HCT116 (cell line): ENCODE measurements at regions of chr1 and their contacts with region 1.

Region 1: DNA sequence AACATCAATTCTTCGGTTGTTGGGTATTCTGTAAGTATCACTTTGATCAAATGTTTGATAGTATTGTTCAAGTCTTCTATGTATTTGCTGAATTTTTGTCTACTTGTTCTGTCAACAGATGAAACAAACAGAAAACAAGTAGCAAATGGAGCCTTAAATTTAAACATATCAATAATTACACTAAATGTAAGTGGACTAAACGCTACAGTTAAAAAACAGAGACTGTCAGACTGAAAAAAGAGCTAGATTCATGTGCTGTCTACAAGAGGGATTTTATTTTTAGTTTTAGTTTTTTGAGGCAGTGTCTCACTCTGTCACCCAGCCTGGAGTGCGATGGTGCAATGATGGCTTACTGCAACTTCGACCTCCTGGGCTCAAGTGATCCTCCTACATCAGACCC is 10.7 kb upstream of the RAD54L start:
- DNase-seq: no peak
- ATAC-seq: no peak
- H3K4me3 ChIP-seq: no peak overlapping the region
- H3K27ac ChIP-seq: no peak overlapping the region
- H3K4me1 ChIP-seq: no peaks in the 10 kb centered on the region
- H3K27me3 ChIP-seq: no peaks in the 10 kb centered on the region
- CTCF ChIP-seq: no peak
- POLR2A ChIP-seq: no peak
- RAD21 ChIP-seq: no peak

Region 2: DNA sequence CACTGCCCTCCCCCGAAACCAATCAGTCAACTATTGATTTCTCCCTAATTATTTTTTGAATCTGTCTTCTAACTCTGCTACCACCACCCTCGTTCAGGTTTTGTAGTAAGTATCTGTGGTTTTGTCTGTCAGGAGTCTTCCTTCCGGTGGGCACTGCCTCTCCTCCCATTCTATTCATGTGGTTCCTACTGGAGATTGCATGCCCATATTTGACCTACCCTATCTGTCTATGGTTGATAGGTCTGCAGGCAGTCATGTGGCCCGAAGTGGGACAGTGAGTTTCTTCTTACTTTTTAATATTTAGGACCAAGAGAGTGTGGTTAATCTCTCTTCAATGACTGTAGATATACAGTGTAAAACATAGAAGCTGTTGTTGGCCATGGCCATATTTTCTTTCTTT is 451.3 kb before region 1 on chr1:
- CTCF ChIA-PET with region 1: no interaction called
- POLR2A ChIA-PET with region 1: no interaction called
- RAD21 ChIA-PET with region 1: no interaction called
- intact Hi-C with region 1: no loop called
- DNase-seq: no peak
- ATAC-seq: no peak
- H3K4me3 ChIP-seq: no peak overlapping the region
- H3K27ac ChIP-seq: no peak overlapping the region
- H3K4me1 ChIP-seq: no peaks in the 10 kb centered on the region
- H3K27me3 ChIP-seq: no peaks in the 10 kb centered on the region
- CTCF ChIP-seq: no peak
- POLR2A ChIP-seq: no peak
- RAD21 ChIP-seq: no peak

Region 3: DNA sequence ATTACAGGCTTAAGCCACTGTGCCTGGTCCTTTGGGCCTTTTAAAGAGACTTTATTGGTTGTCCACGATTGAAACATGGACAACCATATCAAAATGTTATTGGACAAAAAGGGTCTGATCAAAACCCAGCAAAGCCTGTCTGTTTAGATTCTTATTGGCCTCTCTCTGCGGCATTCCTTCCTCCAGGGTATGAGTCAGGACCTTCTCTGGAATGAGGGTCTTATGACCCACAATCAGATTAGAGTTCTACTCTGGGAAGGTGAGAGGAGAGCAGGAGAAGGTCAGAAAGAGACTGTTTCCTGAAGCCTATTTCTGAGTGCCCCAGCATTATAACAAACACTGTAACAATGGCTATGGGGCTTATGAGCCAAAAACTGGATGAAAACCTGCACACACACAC is 25.8 kb before region 1 on chr1:
- CTCF ChIA-PET with region 1: no interaction called
- POLR2A ChIA-PET with region 1: no interaction called
- RAD21 ChIA-PET with region 1: no interaction called
- intact Hi-C with region 1: no loop called
- DNase-seq: no peak
- ATAC-seq: no peak
- H3K4me3 ChIP-seq: no peak overlapping the region
- H3K27ac ChIP-seq: no peak overlapping the region
- H3K4me1 ChIP-seq: peaks cover 0 to 13% of the 10 kb centered on the region in 2 experiments; a peak in 2 of 4 replicates
- H3K27me3 ChIP-seq: no peaks in the 10 kb centered on the region
- CTCF ChIP-seq: no peak
- POLR2A ChIP-seq: no peak
- RAD21 ChIP-seq: no peak

Region 4: GRCh38 chr1:46247436-46248121 is 10.7 kb after region 1 on chr1 and contains the start of gene RAD54L:
- CTCF ChIA-PET with region 1: interaction called, 17 read pairs
- POLR2A ChIA-PET with region 1: no interaction called
- RAD21 ChIA-PET with region 1: no interaction called
- intact Hi-C with region 1: no loop called
- DNase-seq: peak; percentile 98
- ATAC-seq: peak; percentile 90
- H3K4me3 ChIP-seq: peak within 1 kb of the TSS; percentile 55 to 73
- H3K27ac ChIP-seq: peak within 1 kb of the TSS; percentile 78
- H3K4me1 ChIP-seq: peaks cover 16 to 31% of the 10 kb centered on the region in 2 experiments
- H3K27me3 ChIP-seq: no peaks in the 10 kb centered on the region
- CTCF ChIP-seq: no peak
- POLR2A ChIP-seq: peak; percentile 41
- RAD21 ChIP-seq: no peak
- total RNA-seq, gene RAD54L: 28.9 TPM